ENCODE measurements at regions of chr13 and their contacts with region 1.

Region 1: DNA sequence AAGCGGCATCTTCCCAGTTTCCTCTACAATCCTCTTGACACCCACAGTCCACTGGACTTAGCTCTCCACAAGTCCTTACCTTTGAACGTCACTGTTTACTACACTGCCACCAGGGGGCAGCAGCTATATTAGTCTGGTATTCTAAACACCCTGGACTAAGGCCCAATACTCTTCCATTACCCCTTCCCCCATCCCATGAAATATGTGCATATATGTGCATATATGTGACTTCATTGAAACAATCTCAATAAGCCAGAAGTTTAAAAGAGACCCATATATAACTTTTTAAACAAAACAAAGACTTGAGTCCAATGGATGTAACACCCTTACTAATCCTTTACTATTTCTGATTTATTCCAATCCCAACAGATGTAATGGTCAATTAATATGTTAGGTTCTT is 15.5 kb downstream of the GGACT start:
- DNase-seq: peak; percentile 85
- H3K4me3 Mint-ChIP-seq: no peak overlapping the region
- H3K27ac Mint-ChIP-seq: no peak overlapping the region
- H3K4me1 Mint-ChIP-seq: peaks cover 33% of the 10 kb centered on the region
- H3K27me3 Mint-ChIP-seq: peaks cover 5% of the 10 kb centered on the region

Region 2: DNA sequence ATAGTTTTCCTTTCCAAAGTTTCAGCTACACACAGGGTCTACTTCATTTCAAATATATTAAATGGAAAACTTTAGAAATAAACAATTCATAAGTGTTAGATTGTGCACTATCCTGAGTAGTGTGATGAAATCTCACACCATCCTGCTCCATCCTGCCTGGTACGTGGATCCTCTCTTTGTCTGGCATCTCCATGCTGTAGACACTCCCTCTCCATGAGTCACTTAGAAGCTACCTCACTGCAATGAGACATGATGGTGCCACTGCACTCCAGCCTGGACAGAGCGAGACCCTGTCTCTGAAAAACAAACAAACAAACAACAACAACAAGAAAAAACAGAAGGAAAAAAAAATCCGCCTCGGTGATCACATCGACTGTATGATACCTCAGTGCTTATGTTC is 292.4 kb before region 1 on chr13:
- CTCF ChIA-PET with region 1: no interaction called
- DNase-seq: no peak
- H3K4me3 Mint-ChIP-seq: no peak overlapping the region
- H3K27ac Mint-ChIP-seq: no peak overlapping the region
- H3K4me1 Mint-ChIP-seq: no peaks in the 10 kb centered on the region
- H3K27me3 Mint-ChIP-seq: no peaks in the 10 kb centered on the region

Region 3: DNA sequence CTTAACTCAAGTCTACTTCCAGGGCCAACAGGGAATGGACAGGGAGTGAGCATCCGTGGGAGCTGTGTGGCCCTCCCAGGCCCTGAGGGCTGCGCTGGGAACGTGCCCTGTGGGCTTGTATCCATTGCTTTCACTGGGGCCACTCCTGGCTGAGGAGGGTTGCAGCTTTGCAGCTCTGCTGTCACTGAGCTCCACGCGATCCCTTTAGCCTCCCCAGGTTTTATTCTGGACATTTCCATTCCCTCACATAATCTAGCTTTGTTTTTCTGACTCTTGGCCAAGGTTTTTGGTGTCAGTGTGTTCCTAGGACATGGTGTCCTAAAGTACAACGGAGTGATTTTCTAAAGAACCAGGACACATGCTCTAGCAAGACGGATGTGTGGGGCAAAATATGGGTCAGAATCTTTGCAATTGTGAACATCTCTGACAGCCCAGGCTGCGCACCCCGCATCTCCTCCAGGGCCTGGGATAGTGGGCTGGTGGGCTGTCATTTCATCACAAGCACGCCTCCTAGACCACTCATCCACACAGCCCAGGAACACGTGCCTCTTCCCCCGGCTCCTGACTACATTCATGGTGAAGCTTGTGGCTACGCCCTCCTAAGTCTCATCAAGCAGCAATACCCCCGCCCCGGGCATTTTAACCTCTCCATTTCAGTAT is 12.5 kb before region 1 on chr13:
- CTCF ChIA-PET with region 1: interaction called, 14 read pairs
- DNase-seq: no peak
- H3K4me3 Mint-ChIP-seq: no peak overlapping the region
- H3K27ac Mint-ChIP-seq: no peak overlapping the region
- H3K4me1 Mint-ChIP-seq: no peaks in the 10 kb centered on the region
- H3K27me3 Mint-ChIP-seq: peaks cover 4% of the 10 kb centered on the region

Region 4: GRCh38 chr13:100588331-100589177 is 15.4 kb after region 1 on chr13 and contains the start of gene GGACT:
- CTCF ChIA-PET with region 1: interaction called, 74 read pairs
- DNase-seq: peak; percentile 86
- H3K4me3 Mint-ChIP-seq: peak within 1 kb of the TSS; percentile 74
- H3K27ac Mint-ChIP-seq: peak within 1 kb of the TSS; percentile 97
- H3K4me1 Mint-ChIP-seq: peaks cover 62% of the 10 kb centered on the region
- H3K27me3 Mint-ChIP-seq: no peaks in the 10 kb centered on the region

Region 5: GRCh38 chr13:100594731-100595130 is 21.6 kb after region 1 on chr13:
- CTCF ChIA-PET with region 1: interaction called, 74 read pairs
- DNase-seq: no peak
- H3K4me3 Mint-ChIP-seq: no peak overlapping the region
- H3K27ac Mint-ChIP-seq: no peak overlapping the region
- H3K4me1 Mint-ChIP-seq: peaks cover 9% of the 10 kb centered on the region
- H3K27me3 Mint-ChIP-seq: peaks cover 18% of the 10 kb centered on the region

Region 6: DNA sequence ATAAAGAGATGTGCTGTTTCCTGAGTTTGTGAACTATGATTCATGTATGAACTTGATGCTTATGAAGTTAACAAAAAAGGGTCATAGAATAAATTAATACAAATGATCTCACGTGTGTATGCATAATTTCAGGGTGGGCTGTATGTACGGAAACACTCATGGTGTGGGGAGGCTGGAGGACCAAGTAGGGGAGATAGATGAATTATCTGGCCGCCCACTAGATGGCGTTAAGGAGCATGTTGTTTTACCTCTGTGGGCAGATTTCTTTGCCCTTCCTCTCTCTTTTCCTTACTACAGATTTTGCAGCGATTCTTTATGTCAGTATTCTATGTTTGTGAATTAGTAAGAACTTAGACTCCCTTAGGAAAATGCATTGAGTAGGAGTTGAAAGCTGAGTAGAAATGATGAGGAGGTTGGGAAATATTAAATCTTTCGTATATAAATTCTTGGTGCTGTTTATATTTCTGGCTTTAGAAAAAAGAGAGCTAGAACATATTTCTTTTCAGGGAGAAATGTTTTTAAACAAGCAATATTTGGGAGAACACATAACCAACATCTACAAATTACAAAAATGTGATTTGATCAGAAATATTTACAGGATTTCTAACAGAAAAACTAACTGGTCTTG is 148.9 kb after region 1 on chr13:
- CTCF ChIA-PET with region 1: interaction called, 11 read pairs
- DNase-seq: peak; percentile 66
- H3K4me3 Mint-ChIP-seq: no peak overlapping the region
- H3K27ac Mint-ChIP-seq: no peak overlapping the region
- H3K4me1 Mint-ChIP-seq: no peaks in the 10 kb centered on the region
- H3K27me3 Mint-ChIP-seq: peaks cover 6% of the 10 kb centered on the region

Region 7: DNA sequence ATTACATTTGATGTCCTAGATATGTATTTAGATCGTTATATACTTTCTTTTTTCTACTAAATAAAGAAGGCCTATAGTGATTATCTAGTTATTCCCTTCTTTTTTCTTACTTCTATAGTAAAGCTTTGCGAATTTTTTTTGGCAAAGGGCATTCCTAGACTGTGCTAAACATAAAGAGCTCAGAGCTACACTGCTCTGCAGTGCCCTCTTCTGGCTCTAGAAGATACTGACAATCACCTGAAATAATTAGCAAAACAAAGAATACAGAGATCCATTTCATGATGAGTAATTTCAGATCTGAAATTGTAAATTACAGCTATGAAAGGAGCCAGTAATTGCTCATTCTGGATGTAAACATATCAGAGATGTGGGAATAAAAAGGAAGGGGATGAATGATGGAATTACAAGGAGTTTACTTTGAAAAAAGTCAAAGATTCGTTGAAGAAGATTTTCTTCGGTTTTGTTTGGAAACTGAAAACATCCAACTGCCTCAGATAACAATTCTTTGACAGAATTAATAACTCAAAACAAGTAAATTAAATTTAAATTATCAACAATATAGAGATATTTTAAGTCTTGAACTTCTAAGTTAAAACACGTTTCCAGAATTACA is 554.7 kb after region 1 on chr13:
- CTCF ChIA-PET with region 1: interaction called, 22 read pairs
- DNase-seq: peak; percentile 43
- H3K4me3 Mint-ChIP-seq: no peak overlapping the region
- H3K27ac Mint-ChIP-seq: no peak overlapping the region
- H3K4me1 Mint-ChIP-seq: no peaks in the 10 kb centered on the region
- H3K27me3 Mint-ChIP-seq: no peaks in the 10 kb centered on the region

Measured in activated naive CD4-positive, alpha-beta T cell treated with anti-CD3 and anti-CD28 coated beads, Interleukin-2, amount 10 ng/mL, durations not matched to agents 7 days and 5 days (primary cell).